OCI-LY7 (cell line): ENCODE measurements at regions of chr7 and their contacts with region 1.

Region 1: GRCh38 chr7:1151653-1152425 is 8.2 kb downstream of the ZFAND2A start:
- DNase-seq: peak; percentile 43
- H3K4me3 ChIP-seq: no peak overlapping the region
- H3K27ac ChIP-seq: peak overlapping the region; percentile 90
- H3K4me1 ChIP-seq: peaks cover 62% of the 10 kb centered on the region
- CTCF ChIP-seq: no peak

Region 2: GRCh38 chr7:1073142-1073977 is 78.5 kb before region 1 on chr7:
- CTCF ChIA-PET with region 1: no interaction called
- POLR2A ChIA-PET with region 1: no interaction called
- intact Hi-C with region 1: loop called (anchors 5 kb)
- DNase-seq: no peak
- H3K4me3 ChIP-seq: no peak overlapping the region
- H3K27ac ChIP-seq: no peak overlapping the region
- H3K4me1 ChIP-seq: peaks cover 19% of the 10 kb centered on the region
- CTCF ChIP-seq: no peak

Region 3: GRCh38 chr7:1137510-1138167 is 14.2 kb before region 1 on chr7:
- CTCF ChIA-PET with region 1: no interaction called
- POLR2A ChIA-PET with region 1: interaction called, 16 read pairs
- intact Hi-C with region 1: no loop called
- DNase-seq: no peak
- H3K4me3 ChIP-seq: peak overlapping the region; percentile 71
- H3K27ac ChIP-seq: peak overlapping the region; percentile 56
- H3K4me1 ChIP-seq: peaks cover 28% of the 10 kb centered on the region
- CTCF ChIP-seq: no peak

Region 4: DNA sequence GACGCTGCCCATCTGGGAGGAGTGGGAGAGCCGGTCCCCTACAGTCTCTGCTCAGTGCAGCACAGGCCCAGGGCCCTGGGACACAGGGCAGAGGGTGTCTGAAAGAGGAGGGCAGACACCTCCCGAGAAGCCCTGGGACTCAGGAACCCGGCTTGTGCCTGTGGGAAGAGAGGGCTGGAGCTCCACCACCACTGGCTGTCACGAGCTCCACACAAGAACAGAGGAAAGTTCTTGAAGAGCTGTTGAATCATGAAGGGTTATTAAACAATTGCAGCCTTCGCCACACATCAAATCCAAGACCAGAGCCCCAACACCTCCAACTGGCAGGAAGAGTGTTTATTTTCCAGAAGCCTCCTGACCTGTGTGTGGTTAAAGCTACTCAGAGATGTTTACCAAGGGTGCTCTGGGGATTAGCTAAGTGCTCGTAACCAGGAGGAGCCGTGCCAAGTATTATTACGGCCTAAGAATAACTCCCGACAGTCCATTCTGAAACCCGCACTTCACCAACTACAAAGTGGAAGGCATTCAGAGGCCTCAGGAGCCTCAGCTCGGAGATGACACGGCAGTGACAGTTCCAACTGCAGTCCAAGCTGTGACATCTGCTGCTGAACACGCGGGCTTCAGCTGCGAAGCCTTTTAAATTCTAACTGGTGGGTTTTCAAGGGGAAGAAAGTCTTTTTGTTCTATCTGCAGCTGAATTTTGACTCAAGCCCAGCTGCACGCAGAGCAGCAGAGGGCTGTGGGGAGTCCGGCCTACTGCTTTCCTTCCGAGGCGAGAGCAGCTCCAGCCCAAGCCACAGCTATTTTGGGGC is 1005.8 kb after region 1 on chr7:
- CTCF ChIA-PET with region 1: no interaction called
- POLR2A ChIA-PET with region 1: no interaction called
- intact Hi-C with region 1: no loop called
- DNase-seq: peak; percentile 38
- H3K4me3 ChIP-seq: no peak overlapping the region
- H3K27ac ChIP-seq: peak overlapping the region; percentile 21
- H3K4me1 ChIP-seq: peaks cover 18% of the 10 kb centered on the region
- CTCF ChIP-seq: no peak